ENCODE measurements at regions of chr2 and their contacts with region 1.

Region 1: DNA sequence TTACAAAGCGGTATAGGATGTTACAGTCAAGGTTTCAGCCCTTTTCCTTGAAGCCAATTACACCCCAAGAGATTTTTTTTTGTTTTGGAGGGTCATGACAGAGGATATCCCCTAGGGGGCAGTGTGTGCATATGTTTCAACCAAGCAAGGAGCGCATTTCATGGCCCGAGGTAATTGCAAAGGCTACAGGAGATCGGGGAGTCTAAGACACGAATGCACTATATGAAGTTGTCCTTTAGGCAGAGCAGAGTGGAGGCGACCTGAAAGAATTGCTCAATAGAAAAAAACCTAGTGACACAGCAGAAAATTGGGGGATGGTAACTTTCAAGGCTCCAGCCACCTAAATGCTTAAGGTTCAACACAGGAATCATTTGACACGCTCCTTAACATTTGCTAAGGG is 219.8 kb upstream of the PARD3B start:
- DNase-seq: peak; percentile 87
- ATAC-seq: peak; percentile 92
- H3K4me3 ChIP-seq: no peak overlapping the region
- H3K27ac ChIP-seq: no peak overlapping the region
- H3K4me1 ChIP-seq: peaks cover 3% of the 10 kb centered on the region
- H3K27me3 ChIP-seq: no peaks in the 10 kb centered on the region
- CTCF ChIP-seq: peak; percentile 88
- POLR2A ChIP-seq: 0 out of 2 replicates have a peak, but pooled peaks have one; percentile 38
- RAD21 ChIP-seq: peak; percentile 96

Region 2: DNA sequence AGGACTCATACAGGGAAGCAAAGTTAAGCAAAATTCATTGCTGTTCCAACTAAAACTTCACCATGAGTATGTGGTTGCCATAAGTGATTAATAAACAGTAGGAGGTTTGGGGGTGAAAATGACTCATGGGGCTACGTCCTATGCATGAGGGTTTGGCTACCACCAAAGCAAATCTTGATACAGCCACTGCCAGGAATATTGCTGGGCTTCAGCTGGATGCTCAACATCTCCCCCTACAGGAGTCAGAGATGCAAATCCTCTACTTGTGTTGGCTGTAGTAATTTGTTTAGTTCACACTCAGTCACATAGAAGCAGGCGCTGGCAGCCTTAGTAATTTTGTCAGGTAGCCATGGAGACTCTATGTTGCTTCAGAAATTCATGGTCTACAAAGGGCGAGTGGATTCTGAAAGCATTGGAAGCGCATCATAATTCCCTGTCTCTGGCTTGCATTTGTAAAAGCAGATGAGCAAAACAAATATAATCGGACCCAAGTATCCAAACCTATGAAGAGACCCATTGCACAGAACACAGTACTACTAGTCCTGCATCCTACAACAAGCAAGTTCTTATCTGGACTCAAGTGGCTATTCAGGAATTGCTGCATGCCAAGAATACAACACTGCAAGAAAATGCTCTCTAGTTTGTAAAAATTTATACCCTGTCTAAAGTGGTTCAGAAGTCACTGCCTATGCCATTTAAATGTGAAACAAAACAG is 543.0 kb before region 1 on chr2:
- CTCF ChIA-PET with region 1: no interaction called
- POLR2A ChIA-PET with region 1: no interaction called
- dilution Hi-C with region 1: no loop called
- in situ Hi-C with region 1: no loop called
- intact Hi-C with region 1: no loop called
- DNase-seq: peak; percentile 94
- ATAC-seq: peak; percentile 58
- H3K4me3 ChIP-seq: no peak overlapping the region
- H3K27ac ChIP-seq: no peak overlapping the region
- H3K4me1 ChIP-seq: peaks cover 10% of the 10 kb centered on the region
- H3K27me3 ChIP-seq: no peaks in the 10 kb centered on the region
- CTCF ChIP-seq: peak; percentile 83
- POLR2A ChIP-seq: 0 out of 2 replicates have a peak, but pooled peaks have one; percentile 29
- RAD21 ChIP-seq: peak; percentile 87

Region 3: DNA sequence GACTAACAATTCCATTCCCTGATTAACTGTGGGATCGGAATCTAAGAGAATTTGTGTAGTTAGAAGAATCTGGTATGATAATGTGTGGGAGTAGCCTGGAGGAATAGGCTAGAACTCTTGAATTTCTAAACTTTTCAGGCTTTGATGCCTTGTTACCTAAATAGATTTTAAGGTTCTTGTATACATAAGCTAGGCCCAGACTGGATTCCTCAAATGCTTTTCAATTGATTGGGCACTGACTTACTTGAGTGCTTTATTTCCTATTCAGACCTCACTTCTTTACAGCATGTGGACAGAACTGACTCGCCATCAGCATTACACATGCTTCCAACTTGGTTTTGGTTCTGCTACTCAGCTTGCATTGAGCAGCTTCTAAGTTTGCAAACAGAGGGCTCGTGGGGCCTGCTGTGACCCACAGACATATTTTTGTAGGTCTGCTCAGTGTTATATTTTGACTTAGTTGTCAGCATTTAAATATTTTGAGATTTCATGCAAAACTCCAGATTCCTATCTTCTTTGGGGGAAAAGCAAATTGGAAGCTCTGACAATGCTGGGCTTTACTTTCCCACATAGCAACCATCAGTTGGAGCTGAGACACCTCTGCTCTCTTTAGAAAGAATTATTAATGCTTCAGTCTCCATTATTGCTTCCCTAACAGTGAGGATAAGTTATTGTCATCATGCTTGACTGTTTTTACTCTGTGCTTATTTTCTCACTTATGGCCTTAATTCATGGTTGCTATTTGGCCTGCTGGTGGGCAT is 225.5 kb after region 1 on chr2:
- CTCF ChIA-PET with region 1: no interaction called
- POLR2A ChIA-PET with region 1: no interaction called
- dilution Hi-C with region 1: no loop called
- in situ Hi-C with region 1: no loop called
- intact Hi-C with region 1: loop called (anchors 2 kb)
- DNase-seq: peak; percentile 96
- ATAC-seq: peak; percentile 84
- H3K4me3 ChIP-seq: no peak overlapping the region; the same call in 1 of the 2 replicates
- H3K27ac ChIP-seq: peak overlapping the region; percentile 99
- H3K4me1 ChIP-seq: peaks cover 20% of the 10 kb centered on the region
- H3K27me3 ChIP-seq: no peaks in the 10 kb centered on the region
- CTCF ChIP-seq: no peak
- POLR2A ChIP-seq: no peak
- RAD21 ChIP-seq: no peak

Region 4: GRCh38 chr2:204691911-204692510 is 366.5 kb after region 1 on chr2:
- CTCF ChIA-PET with region 1: interaction called, 3 read pairs
- POLR2A ChIA-PET with region 1: no interaction called
- dilution Hi-C with region 1: no loop called
- in situ Hi-C with region 1: loop called (anchors 5 kb)
- intact Hi-C with region 1: loop called (anchors 1 kb)
- DNase-seq: peak; percentile 91
- ATAC-seq: peak; percentile 74
- H3K4me3 ChIP-seq: no peak overlapping the region
- H3K27ac ChIP-seq: no peak overlapping the region
- H3K4me1 ChIP-seq: peaks cover 3% of the 10 kb centered on the region; the same call in 1 of the 2 replicates
- H3K27me3 ChIP-seq: no peaks in the 10 kb centered on the region
- CTCF ChIP-seq: peak; percentile 84
- POLR2A ChIP-seq: no peak
- RAD21 ChIP-seq: peak; percentile 92

Region 5: DNA sequence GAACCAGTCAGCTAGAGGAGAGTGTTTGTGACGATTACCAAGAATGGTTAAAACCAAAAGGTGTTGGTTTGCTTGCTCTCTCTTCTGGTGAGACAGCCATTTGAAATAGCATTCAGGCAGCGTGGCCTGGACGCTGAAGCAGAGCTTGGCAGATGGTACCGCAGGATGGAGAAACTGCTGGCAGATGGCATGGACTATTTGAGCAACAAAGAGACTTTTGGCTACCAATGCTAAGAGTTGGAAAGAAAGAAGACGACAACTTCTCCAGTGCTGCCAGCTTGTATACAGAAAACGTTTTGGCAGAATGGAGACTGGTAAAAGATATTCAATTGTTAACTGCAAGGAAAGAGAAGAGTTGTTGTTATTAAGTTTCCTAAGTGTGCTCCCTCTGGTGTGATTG is 534.8 kb after region 1 on chr2:
- CTCF ChIA-PET with region 1: no interaction called
- POLR2A ChIA-PET with region 1: no interaction called
- dilution Hi-C with region 1: no loop called
- in situ Hi-C with region 1: loop called (anchors 25 kb)
- intact Hi-C with region 1: loop called (anchors 5 kb)
- DNase-seq: no peak
- ATAC-seq: no peak
- H3K4me3 ChIP-seq: no peak overlapping the region
- H3K27ac ChIP-seq: no peak overlapping the region
- H3K4me1 ChIP-seq: peaks cover 7% of the 10 kb centered on the region
- H3K27me3 ChIP-seq: no peaks in the 10 kb centered on the region
- CTCF ChIP-seq: no peak
- POLR2A ChIP-seq: no peak
- RAD21 ChIP-seq: no peak

Region 6: DNA sequence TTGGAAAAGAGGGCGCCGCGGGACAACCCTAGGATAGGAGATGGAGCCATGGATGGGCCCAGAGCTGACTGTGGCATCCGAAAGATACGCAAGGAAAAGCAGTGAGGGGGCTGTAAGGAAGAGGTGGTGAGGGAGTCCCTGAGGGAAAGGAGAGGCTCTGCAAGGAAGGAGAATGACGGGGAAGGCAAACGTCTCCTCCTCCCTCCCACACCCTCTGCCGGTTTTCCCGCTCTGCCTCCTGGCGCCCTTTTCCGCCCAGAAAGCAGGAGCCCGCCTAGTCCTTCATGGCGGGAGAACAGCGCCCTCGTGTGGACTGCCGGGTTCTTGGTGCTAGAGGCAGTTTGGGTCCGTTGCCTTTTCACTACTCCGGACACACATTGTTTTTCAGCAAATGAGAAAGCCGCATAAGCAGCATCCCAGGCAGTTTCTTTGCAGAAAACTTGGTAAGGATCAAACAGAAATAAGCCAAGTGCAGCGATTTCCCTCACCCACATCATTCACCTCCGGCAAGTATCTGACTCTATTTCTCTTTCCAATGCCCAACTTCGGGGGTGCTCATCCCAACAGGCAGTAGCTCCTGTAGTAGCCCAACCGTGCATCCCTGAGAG is 1560.1 kb after region 1 on chr2:
- CTCF ChIA-PET with region 1: no interaction called
- POLR2A ChIA-PET with region 1: no interaction called
- dilution Hi-C with region 1: no loop called
- in situ Hi-C with region 1: no loop called
- intact Hi-C with region 1: loop called (anchors 5 kb)
- DNase-seq: peak; percentile 72
- ATAC-seq: peak; percentile 94
- H3K4me3 ChIP-seq: no peak overlapping the region
- H3K27ac ChIP-seq: no peak overlapping the region
- H3K4me1 ChIP-seq: no peaks in the 10 kb centered on the region
- H3K27me3 ChIP-seq: peaks cover 6% of the 10 kb centered on the region
- CTCF ChIP-seq: peak; percentile 93
- POLR2A ChIP-seq: no peak
- RAD21 ChIP-seq: peak; percentile 95